ENCODE measurements at regions of chr12 and their contacts with region 1.

Region 1: DNA sequence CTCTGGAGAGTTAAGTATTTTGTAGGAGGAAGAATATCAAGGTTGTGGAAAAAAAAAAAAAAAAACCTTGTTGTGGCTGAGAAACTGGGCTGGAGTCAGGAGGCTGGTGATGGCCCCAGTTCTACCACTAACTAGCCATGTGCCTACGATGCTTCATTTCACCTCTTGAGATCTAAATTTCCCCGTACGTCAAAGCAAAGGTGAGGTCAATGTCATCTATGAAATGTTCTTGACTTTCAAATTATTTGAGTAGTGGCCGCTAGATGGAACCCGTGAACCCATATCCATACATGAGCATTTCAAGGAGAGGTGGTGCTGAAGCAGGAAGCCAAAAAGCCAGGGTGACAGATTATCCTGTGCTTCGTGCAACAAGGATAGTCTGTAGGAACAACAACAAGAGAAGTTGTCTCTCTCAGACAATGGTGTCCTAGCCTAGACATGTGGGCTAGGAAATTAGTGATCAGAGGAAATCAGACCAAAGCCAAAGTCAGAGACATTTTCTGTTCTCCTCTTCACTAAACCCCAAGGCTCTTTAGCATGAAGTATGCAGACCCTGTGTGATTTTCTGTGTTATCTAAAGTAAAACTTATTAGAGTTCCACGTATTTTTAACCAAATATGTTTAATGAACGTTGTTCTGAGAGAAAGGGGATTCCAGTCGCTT is 95.5 kb upstream of the ETV6 start:
- DNase-seq: peak; percentile 88
- ATAC-seq: peak; percentile 87
- H3K4me3 ChIP-seq: no peak overlapping the region
- H3K27ac ChIP-seq: peak overlapping the region; percentile 70
- H3K4me1 ChIP-seq: peaks cover 4% of the 10 kb centered on the region; the same call in 1 of the 2 replicates
- H3K27me3 ChIP-seq: no peaks in the 10 kb centered on the region
- CTCF ChIP-seq: peak; percentile 61 to 77 (median 63)
- EP300 ChIP-seq: peak; percentile 45 to 58; a peak in 2 of 4 replicates
- POLR2A ChIP-seq: no peak
- RAD21 ChIP-seq: peak; percentile 88

Region 2: GRCh38 chr12:11576104-11576503 is 22.1 kb after region 1 on chr12:
- CTCF ChIA-PET with region 1: interaction called, 148 read pairs
- POLR2A ChIA-PET with region 1: interaction called, 64 read pairs
- RAD21 ChIA-PET with region 1: interaction called, 322 read pairs
- SMC1A ChIA-PET with region 1: interaction called, 225 read pairs
- in situ Hi-C with region 1: no loop called
- intact Hi-C with region 1: loop called (anchors 1 kb)
- DNase-seq: peak; percentile 86
- ATAC-seq: peak; percentile 53
- H3K4me3 ChIP-seq: no peak overlapping the region
- H3K27ac ChIP-seq: peak overlapping the region; percentile 89
- H3K4me1 ChIP-seq: peaks cover 43% of the 10 kb centered on the region
- H3K27me3 ChIP-seq: no peaks in the 10 kb centered on the region
- CTCF ChIP-seq: no peak
- EP300 ChIP-seq: no peak
- POLR2A ChIP-seq: no peak
- RAD21 ChIP-seq: no peak

Region 3: GRCh38 chr12:11621797-11622423 is 67.9 kb after region 1 on chr12:
- CTCF ChIA-PET with region 1: interaction called, 13 read pairs
- POLR2A ChIA-PET with region 1: interaction called, 3 read pairs
- RAD21 ChIA-PET with region 1: interaction called, 4 read pairs
- SMC1A ChIA-PET with region 1: interaction called, 17 read pairs
- in situ Hi-C with region 1: no loop called
- intact Hi-C with region 1: no loop called
- DNase-seq: no peak
- ATAC-seq: peak; percentile 64
- H3K4me3 ChIP-seq: no peak overlapping the region
- H3K27ac ChIP-seq: no peak overlapping the region
- H3K4me1 ChIP-seq: no peaks in the 10 kb centered on the region
- H3K27me3 ChIP-seq: no peaks in the 10 kb centered on the region
- CTCF ChIP-seq: peak in 1 of 3 experiments; percentile 8; a peak in 2 of 6 replicates
- EP300 ChIP-seq: no peak
- POLR2A ChIP-seq: no peak
- RAD21 ChIP-seq: peak; percentile 41; the same call in 1 of the 2 replicates

Region 4: DNA sequence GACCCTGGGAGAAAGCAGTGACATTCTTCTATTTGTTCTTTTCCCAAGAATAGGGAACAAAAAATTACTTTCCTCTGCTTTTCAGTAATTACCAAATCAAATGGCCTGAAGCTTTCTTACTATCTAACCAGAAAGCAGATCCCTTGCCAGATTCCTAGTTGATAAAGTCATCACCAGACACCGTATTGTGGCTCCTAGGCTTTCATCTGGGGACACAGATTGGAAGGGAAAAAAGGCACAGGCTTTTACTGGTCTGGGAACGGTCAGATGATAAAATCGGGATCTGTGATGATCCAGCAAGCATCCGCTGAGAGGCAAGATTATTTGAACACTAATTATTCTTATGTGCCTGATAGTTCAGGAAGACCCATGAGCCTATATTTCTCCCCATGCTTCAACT is 437.6 kb after region 1 on chr12:
- CTCF ChIA-PET with region 1: no interaction called
- POLR2A ChIA-PET with region 1: no interaction called
- RAD21 ChIA-PET with region 1: no interaction called
- SMC1A ChIA-PET with region 1: no interaction called
- in situ Hi-C with region 1: no loop called
- intact Hi-C with region 1: no loop called
- DNase-seq: no peak
- ATAC-seq: no peak
- H3K4me3 ChIP-seq: no peak overlapping the region
- H3K27ac ChIP-seq: no peak overlapping the region
- H3K4me1 ChIP-seq: no peaks in the 10 kb centered on the region
- H3K27me3 ChIP-seq: no peaks in the 10 kb centered on the region
- CTCF ChIP-seq: no peak
- EP300 ChIP-seq: no peak
- POLR2A ChIP-seq: no peak
- RAD21 ChIP-seq: no peak

Measured in GM12878 (cell line).